Lower leg skin (tissue), 4 donors: ENCODE measurements at regions of chr14 and their contacts with region 1.

Region 1: GRCh38 chr14:72472845-72473244 is 421.1 kb downstream of the DPF3 start:
- DNase-seq: no peak
- H3K4me3 ChIP-seq: no peak overlapping the region
- CTCF ChIP-seq: no peak
- POLR2A ChIP-seq: no peak

Region 2: GRCh38 chr14:72443991-72444441 is 28.8 kb before region 1 on chr14:
- intact Hi-C with region 1: no loop called
- DNase-seq: no peak
- H3K4me3 ChIP-seq: no peak overlapping the region
- CTCF ChIP-seq: no peak
- POLR2A ChIP-seq: no peak

Region 3: GRCh38 chr14:74240794-74241651 is 1768.2 kb after region 1 on chr14:
- intact Hi-C with region 1: loop called (anchors 5 kb)
- DNase-seq: no peak
- H3K4me3 ChIP-seq: peak overlapping the region; percentile 0
- CTCF ChIP-seq: no peak
- POLR2A ChIP-seq: no peak